ENCODE measurements at regions of chr2 and their contacts with region 1.

Region 1: DNA sequence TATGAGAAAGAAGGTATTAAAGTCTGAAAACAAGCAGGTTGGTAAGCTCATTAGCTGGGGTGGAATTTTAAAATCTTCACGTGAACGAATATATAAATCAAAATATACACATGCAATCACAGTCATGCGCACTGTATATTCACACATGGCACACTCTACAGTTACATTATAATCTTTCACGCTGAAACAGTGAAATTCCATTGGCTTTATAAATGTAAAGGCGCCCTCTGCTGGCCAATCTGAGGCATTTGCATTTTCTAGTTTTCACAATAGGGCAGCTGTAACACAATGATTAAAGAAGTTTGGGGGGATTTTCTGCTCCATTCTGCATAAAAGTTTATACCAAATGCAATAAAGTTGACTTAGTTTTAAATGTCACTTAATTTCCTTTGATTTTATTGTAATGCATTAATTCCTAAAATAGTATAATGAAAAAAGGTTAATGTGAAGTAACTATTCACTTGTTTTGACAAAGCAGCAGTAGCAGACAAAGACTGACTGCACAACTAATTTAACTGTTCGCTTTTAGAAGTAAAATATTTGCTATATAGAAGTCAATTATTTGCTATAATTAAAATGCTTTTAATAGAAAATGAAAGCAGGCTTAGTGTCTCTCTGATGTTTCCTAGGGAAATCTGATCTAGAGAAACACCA is 17.2 kb downstream of the IFIH1 start:
- DNase-seq: peak; percentile 63
- ATAC-seq: peak; percentile 81
- H3K4me3 Mint-ChIP-seq: no peak overlapping the region
- H3K27ac Mint-ChIP-seq: no peak overlapping the region
- H3K4me1 Mint-ChIP-seq: peaks cover 6% of the 10 kb centered on the region
- H3K27me3 Mint-ChIP-seq: no peaks in the 10 kb centered on the region

Region 2: GRCh38 chr2:162282765-162283425 is 18.4 kb before region 1 on chr2:
- CTCF ChIA-PET with region 1: interaction called, 36 read pairs
- DNase-seq: no peak
- ATAC-seq: no peak
- H3K4me3 Mint-ChIP-seq: no peak overlapping the region
- H3K27ac Mint-ChIP-seq: no peak overlapping the region
- H3K4me1 Mint-ChIP-seq: peaks cover under 1% of the 10 kb centered on the region
- H3K27me3 Mint-ChIP-seq: no peaks in the 10 kb centered on the region

Region 3: DNA sequence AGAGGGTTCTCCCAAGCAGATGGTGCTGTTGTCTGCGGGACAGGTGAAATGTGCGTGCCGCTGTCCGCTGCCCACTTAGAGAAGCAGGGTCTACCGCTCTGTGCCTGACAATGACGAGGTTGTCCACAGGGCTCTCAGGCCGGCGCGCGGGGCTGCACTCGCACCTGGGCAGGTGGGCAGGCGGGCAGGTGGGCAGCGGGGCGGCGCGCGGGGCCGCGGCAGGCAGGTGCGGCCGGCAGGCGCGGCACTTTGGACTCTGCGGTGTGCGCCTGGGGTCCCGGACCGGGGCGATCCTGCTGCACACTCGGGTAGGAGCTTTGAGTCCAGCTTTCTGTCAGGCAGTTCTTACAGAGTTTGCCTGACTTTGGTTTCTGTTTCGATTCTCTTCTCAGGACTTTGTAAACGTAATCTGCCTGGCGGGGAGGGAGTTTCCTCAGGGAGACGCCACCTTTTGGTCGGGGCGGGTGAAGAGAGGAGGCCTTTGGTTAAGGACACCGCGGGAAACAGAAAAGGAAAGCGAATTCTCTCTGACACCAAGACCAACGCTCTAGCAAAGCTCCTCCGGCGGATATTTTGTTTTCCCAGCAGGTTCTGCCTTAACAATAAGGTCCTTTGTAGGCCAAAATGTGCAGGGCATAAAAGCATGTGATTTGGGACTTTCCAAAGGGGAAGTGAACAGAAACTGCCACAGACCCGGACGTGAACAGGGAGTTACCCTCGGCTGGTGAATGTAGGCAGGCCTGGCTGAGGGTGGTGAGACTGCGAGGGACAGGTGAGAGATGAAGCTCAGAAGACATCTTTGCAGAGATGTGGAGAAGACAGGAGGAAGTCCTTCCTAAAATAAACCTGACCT is 17.3 kb after region 1 on chr2 and contains the start of gene IFIH1:
- CTCF ChIA-PET with region 1: interaction called, 12 read pairs
- DNase-seq: peak; percentile 88
- ATAC-seq: peak; percentile 83
- H3K4me3 Mint-ChIP-seq: peak within 1 kb of the TSS; percentile 93
- H3K27ac Mint-ChIP-seq: peak within 1 kb of the TSS; percentile 99
- H3K4me1 Mint-ChIP-seq: peaks cover 53% of the 10 kb centered on the region
- H3K27me3 Mint-ChIP-seq: no peaks in the 10 kb centered on the region
- total RNA-seq, gene IFIH1: 66.8 to 90.0 TPM

Region 4: DNA sequence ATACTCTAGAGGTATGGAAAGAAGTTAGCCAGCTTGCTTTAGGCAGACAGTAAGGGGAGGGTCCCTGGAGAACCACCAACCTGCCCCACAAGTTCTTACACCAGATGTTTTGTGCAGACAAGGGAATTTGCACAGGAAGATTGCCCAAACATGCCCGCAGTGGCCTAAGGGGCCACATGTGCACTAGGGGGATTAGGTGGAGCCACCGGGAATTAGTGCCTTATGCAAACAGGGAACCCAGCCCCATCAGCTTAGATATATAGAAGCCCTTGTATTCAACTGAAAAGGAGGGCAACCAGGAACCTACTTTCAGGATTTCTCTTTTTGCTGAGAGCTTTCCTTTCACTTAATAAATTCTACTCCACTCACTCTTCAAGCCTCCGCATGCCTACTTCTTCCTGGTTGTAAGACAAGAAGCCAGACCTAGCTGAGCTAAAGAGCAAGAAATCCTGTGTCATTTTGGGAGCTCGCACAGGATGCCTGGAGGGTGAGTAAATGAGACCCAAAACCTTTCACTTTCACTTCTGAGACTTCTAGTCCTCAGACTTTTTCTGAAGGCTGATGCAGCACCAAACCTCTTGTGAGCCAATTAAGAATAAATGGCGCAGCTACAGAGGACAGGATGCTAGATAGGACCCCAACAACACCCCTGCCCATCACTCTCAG is 188.9 kb after region 1 on chr2:
- CTCF ChIA-PET with region 1: no interaction called
- DNase-seq: no peak
- ATAC-seq: no peak
- H3K4me3 Mint-ChIP-seq: no peak overlapping the region
- H3K27ac Mint-ChIP-seq: no peak overlapping the region
- H3K4me1 Mint-ChIP-seq: no peaks in the 10 kb centered on the region
- H3K27me3 Mint-ChIP-seq: no peaks in the 10 kb centered on the region

Measured in activated CD8-positive, alpha-beta memory T cell treated with anti-CD3 and anti-CD28 coated beads, Interleukin-2, amount 10 ng/mL, durations not matched to agents 7 days and 5 days (primary cell).